ENCODE measurements at regions of chr11 and their contacts with region 1.

Region 1: GRCh38 chr11:36564376-36565030 is 3.3 kb upstream of the RAG1 start:
- DNase-seq: peak; percentile 35
- ATAC-seq: peak; percentile 83

Region 2: GRCh38 chr11:36212564-36213392 is 351.7 kb before region 1 on chr11:
- intact Hi-C with region 1: no loop called
- DNase-seq: no peak
- ATAC-seq: no peak

Region 3: GRCh38 chr11:36622431-36623136 is 58.1 kb after region 1 on chr11:
- intact Hi-C with region 1: loop called (anchors 10 kb)
- DNase-seq: no peak
- ATAC-seq: peak; percentile 66

Region 4: GRCh38 chr11:36672813-36673450 is 108.4 kb after region 1 on chr11:
- intact Hi-C with region 1: loop called (anchors 1 kb)
- DNase-seq: no peak
- ATAC-seq: no peak

Region 5: DNA sequence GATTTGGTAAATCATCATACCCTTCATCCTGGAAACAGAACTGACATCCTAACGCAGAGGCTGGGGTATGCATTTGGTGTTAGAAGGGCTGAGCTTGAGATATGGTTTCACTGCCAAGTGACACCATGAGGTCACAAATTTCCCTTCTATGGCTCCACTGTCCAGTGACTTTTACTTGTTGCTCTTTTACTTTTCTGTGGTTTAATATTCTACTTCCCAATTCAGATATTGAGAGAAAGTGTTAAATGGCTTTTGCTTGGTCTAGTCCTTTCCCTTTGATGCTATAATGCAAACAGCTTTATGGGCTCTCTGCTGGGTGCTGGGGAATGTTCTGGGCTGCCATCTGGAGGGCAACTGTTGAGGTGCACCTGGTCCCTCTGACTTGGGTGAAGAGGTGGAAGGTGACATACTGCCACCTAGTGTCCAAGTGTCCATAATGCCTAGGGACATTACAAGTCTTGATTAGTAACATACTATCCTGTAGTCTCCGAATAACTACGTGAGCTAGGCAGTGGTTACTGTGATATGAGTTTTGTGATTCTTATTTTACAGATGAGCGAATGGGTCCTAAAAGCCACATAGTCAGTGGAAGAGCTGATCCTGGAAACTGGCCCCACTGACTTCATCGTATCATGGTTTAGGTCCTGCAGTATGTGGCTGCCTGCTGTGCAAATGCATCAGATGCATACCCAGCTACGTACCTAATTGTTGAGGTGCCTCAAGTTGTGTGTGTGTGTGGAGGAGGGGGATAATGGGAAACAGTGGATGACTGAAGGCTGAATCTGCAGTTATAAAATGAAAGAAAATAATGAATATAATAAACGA is 182.6 kb after region 1 on chr11:
- intact Hi-C with region 1: loop called (anchors 10 kb)
- DNase-seq: peak; percentile 88
- ATAC-seq: peak; percentile 98